Lower leg skin (tissue), 4 donors: ENCODE measurements at regions of chr14 and their contacts with region 1.

Region 1: GRCh38 chr14:94036313-94037050 is 10.3 kb downstream of the OTUB2 start:
- DNase-seq: peak; percentile 71 to 92
- H3K4me3 ChIP-seq: no peak overlapping the region
- CTCF ChIP-seq: peak in 1 of 3 donors; percentile 59
- POLR2A ChIP-seq: no peak

Region 2: GRCh38 chr14:94136575-94137331 is 100.3 kb after region 1 on chr14:
- intact Hi-C with region 1: loop called (anchors 5 kb)
- DNase-seq: peak; percentile 87 to 97
- H3K4me3 ChIP-seq: no peak overlapping the region
- CTCF ChIP-seq: peak in 2 of 3 donors; percentile 93 to 96
- POLR2A ChIP-seq: no peak